WTC11 (cell line): ENCODE measurements at regions of chr6 and their contacts with region 1.

Region 1: DNA sequence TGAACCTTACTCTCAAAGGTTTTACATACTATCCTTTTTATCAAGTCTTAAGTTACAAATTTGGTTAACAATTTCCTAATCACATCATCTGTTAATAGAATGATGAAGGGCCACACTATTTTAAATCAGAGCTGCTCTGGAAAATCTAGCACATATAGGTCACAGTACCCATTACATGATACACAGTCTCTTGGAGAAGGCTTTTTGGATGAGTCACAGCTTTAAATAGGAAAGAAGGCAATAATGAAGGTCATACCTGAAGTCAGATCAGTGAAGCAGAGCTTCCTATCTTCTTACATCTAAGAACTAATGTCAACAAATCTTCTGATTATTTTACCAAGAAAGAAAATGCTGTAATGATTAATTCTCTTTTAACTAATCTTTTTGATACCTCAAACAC is 248.5 kb downstream of the BTBD9 start:
- DNase-seq: no peak
- ATAC-seq: no peak
- H3K4me3 Mint-ChIP-seq: no peak overlapping the region
- H3K27ac Mint-ChIP-seq: no peak overlapping the region
- H3K4me1 Mint-ChIP-seq: peaks cover 31% of the 10 kb centered on the region
- H3K27me3 Mint-ChIP-seq: no peaks in the 10 kb centered on the region; the same call in 1 of the 2 replicates
- CTCF ChIP-seq: no peak

Region 2: DNA sequence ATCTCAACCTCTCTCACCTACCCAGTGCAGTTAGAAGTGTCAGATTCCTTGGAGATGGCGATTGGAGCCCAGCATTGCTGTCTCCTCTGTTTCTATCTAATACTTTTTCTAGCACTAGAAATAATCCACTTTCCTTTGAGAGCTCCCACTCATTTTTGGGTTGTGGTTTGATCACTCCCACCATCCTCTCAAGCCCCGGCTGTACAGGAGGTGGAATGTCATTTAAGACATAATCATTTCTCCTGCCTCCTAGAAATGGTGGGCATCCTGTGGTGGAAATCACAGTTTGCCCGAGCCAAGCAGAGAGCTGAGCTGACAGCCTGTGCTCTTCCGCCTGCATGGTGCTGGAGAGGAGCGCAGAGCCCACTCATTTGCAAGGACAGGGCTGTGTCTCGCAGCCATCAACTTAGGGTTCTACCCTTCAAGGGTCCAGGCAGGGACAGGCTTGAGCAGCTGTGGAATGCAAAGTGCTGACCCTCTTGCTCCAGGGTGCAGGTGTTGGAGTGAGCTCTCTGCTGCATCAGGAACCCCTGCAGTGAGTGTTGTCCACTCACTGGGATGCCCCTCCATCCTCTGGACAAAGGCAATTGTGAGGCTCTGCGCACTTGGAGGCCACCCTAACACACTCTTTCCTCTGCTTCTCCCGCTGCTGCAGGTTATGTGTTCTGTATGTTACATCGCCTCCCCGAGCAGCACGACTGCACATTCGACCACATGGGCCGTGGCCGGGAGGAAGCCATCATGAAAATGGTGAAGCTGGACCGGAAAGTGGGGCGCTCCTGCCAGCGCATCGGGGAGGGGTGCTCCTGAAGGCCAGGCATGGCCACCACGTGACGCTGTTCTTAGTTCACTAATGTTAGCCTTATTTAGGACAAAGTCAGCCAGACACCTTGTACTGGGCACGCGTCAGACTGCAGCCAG is 239.4 kb before region 1 on chr6:
- CTCF ChIA-PET with region 1: no interaction called
- POLR2A ChIA-PET with region 1: interaction called, 10 read pairs
- DNase-seq: peak; percentile 6
- ATAC-seq: no peak
- H3K4me3 Mint-ChIP-seq: no peak overlapping the region
- H3K27ac Mint-ChIP-seq: no peak overlapping the region
- H3K4me1 Mint-ChIP-seq: peaks cover 19% of the 10 kb centered on the region
- H3K27me3 Mint-ChIP-seq: no peaks in the 10 kb centered on the region
- CTCF ChIP-seq: no peak

Region 3: GRCh38 chr6:38307740-38308139 is 83.5 kb before region 1 on chr6:
- CTCF ChIA-PET with region 1: no interaction called
- POLR2A ChIA-PET with region 1: no interaction called
- DNase-seq: no peak
- ATAC-seq: no peak
- H3K4me3 Mint-ChIP-seq: no peak overlapping the region
- H3K27ac Mint-ChIP-seq: no peak overlapping the region
- H3K4me1 Mint-ChIP-seq: peaks cover 19% of the 10 kb centered on the region
- H3K27me3 Mint-ChIP-seq: no peaks in the 10 kb centered on the region
- CTCF ChIP-seq: no peak